CD8-positive, alpha-beta T cell (primary cell): ENCODE measurements at regions of chr12 and their contacts with region 1.

Region 1: DNA sequence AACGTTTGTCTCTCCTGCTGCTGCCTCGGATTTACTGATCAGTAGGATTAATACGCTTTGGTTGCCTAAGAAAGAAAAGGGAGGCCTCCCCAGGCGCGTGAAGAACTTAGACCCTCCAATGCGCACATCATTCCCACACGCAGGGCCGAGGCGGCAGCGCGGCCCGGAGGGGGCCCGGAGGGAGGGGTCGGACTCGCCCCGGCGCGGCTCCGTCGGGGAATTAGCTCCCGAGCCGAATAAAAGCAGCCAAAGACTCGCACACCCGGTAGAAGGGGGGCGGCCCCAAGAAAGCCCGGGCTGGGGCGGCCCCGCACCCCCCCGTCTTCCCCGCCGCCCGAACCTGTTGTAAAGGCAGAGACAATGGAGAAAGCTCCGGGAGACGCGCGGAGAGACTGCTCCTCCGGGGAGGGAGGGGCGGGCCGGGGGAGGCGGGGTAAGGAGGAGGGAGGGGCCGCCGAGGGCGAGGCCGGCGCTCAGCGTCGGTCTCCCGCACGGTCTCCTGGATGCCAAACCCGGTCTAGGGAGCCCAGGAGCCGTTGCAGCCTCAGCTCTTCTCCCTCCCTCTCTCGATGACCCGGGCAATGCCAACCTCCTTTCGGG is at the start of gene NELL2:
- DNase-seq: peak; percentile 46 to 84 (median 74)
- ATAC-seq: peak; percentile 75
- H3K4me3 ChIP-seq: peak within 1 kb of the TSS; percentile 69 to 77
- H3K4me3 Mint-ChIP-seq: peak within 1 kb of the TSS; percentile 98
- H3K27ac ChIP-seq: peak within 1 kb of the TSS; percentile 33 to 59
- H3K27ac Mint-ChIP-seq: peak within 1 kb of the TSS; percentile 92
- H3K4me1 ChIP-seq: peaks cover 14% of the 10 kb centered on the region
- H3K4me1 Mint-ChIP-seq: peaks cover 27% of the 10 kb centered on the region
- H3K27me3 ChIP-seq: peaks cover 0 to 6% of the 10 kb centered on the region in 2 experiments
- H3K27me3 Mint-ChIP-seq: peaks cover 2% of the 10 kb centered on the region
- CTCF ChIP-seq: no peak
- total RNA-seq, gene NELL2: 384 to 390 TPM

Region 2: GRCh38 chr12:44774815-44775411 is 101.1 kb before region 1 on chr12:
- CTCF ChIA-PET with region 1: interaction called, 116 read pairs
- POLR2A ChIA-PET with region 1: interaction called, 6 read pairs
- intact Hi-C with region 1: loop called (anchors 1 kb)
- DNase-seq: peak; percentile 37 to 81 (median 67)
- ATAC-seq: peak; percentile 58
- H3K4me3 ChIP-seq: no peak overlapping the region
- H3K4me3 Mint-ChIP-seq: no peak overlapping the region
- H3K27ac ChIP-seq: no peak overlapping the region
- H3K27ac Mint-ChIP-seq: no peak overlapping the region
- H3K4me1 ChIP-seq: no peaks in the 10 kb centered on the region
- H3K4me1 Mint-ChIP-seq: peaks cover 15% of the 10 kb centered on the region
- H3K27me3 ChIP-seq: no peaks in the 10 kb centered on the region
- H3K27me3 Mint-ChIP-seq: no peaks in the 10 kb centered on the region
- CTCF ChIP-seq: peak; percentile 93

Region 3: DNA sequence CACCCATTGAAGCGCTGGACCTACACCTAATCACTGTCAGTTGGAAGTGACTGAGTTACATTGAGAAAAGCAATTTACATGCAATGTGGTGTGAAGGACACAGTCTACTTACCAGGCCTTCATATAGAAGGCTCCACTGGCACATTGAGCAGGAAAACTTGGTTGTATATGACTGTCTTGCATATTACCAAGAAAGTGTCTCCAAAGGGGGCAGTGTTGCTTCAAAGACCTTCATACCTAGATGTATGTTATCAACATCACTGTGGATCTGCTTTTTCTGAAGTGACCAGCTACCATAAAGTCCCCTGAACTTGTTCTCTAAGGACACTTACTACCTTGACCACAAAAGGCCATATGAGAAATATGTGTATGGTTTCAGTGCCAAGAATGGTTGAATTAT is 64.0 kb before region 1 on chr12:
- CTCF ChIA-PET with region 1: interaction called, 151 read pairs
- POLR2A ChIA-PET with region 1: interaction called, 41 read pairs
- intact Hi-C with region 1: loop called (anchors 1 kb)
- DNase-seq: peak in 6 of 9 experiments; percentile 19 to 86 (median 57)
- ATAC-seq: peak; percentile 83
- H3K4me3 ChIP-seq: no peak overlapping the region
- H3K4me3 Mint-ChIP-seq: no peak overlapping the region
- H3K27ac ChIP-seq: no peak overlapping the region
- H3K27ac Mint-ChIP-seq: peak overlapping the region; percentile 86
- H3K4me1 ChIP-seq: peaks cover 54% of the 10 kb centered on the region
- H3K4me1 Mint-ChIP-seq: peaks cover 64% of the 10 kb centered on the region
- H3K27me3 ChIP-seq: no peaks in the 10 kb centered on the region
- H3K27me3 Mint-ChIP-seq: no peaks in the 10 kb centered on the region
- CTCF ChIP-seq: peak; percentile 55

Region 4: DNA sequence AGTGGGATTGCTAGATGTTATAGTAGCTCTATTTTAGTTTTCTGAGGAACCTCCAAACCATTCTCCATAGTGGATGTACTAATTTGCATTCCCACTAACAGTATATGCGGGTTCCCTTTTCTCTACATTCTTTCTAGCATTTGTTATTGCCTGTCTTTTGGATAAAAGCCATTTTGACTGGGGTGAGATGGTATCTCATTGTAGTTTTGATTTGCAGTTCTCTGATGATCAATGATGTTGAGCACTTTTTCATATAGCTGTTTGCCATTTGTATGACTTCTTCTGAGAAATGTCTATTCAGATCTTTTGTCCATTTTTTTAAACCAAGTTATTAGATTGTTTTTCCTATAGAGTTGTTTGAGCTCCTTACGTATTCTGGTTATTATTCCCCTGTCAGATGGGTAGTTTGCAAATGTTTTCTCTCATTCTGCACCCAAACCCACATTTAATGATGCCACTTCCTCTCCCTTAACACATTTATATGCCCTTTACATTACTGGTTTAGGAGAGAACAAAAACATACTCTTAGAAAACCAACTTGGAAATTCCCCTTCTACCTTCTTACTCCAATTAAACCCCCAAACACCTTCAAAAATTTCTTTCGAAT is 48.1 kb before region 1 on chr12:
- CTCF ChIA-PET with region 1: interaction called, 12 read pairs
- POLR2A ChIA-PET with region 1: interaction called, 9 read pairs
- intact Hi-C with region 1: no loop called
- DNase-seq: peak in 2 of 9 experiments; percentile 77 to 89
- ATAC-seq: peak; percentile 86
- H3K4me3 ChIP-seq: peak overlapping the region in 1 of 2 experiments; percentile 9
- H3K4me3 Mint-ChIP-seq: peak overlapping the region; percentile 65
- H3K27ac ChIP-seq: peak overlapping the region; percentile 63 to 78
- H3K27ac Mint-ChIP-seq: peak overlapping the region; percentile 90
- H3K4me1 ChIP-seq: peaks cover 58% of the 10 kb centered on the region
- H3K4me1 Mint-ChIP-seq: peaks cover 69% of the 10 kb centered on the region
- H3K27me3 ChIP-seq: no peaks in the 10 kb centered on the region
- H3K27me3 Mint-ChIP-seq: no peaks in the 10 kb centered on the region
- CTCF ChIP-seq: no peak

Region 5: DNA sequence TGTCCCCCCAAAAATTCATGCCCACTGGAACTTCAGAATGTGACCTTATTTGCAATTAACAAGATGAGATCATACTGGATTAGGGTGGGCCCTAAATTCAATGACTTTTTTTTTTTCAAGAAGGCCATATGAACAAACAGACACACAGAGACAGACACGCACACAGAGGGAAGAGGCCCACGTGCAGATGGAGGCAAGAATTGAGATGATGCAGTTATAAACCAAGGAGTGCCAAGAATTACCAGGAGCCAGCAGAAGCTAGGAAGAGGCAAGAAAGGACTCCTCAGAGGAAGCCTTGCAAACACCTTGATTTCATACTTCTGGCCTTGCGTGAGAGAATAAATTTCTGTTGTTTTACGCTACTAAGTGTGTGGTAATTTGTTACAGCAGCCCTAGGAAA is 33.4 kb before region 1 on chr12:
- CTCF ChIA-PET with region 1: interaction called, 29 read pairs
- POLR2A ChIA-PET with region 1: interaction called, 28 read pairs
- intact Hi-C with region 1: loop called in 1 of 2 experiments (anchors 5 kb)
- DNase-seq: peak in 4 of 9 experiments; percentile 30 to 67 (median 38)
- ATAC-seq: peak; percentile 65
- H3K4me3 ChIP-seq: peak overlapping the region; percentile 23 to 43
- H3K4me3 Mint-ChIP-seq: peak overlapping the region; percentile 73
- H3K27ac ChIP-seq: peak overlapping the region; percentile 62 to 66
- H3K27ac Mint-ChIP-seq: peak overlapping the region; percentile 95
- H3K4me1 ChIP-seq: peaks cover 95% of the 10 kb centered on the region
- H3K4me1 Mint-ChIP-seq: peaks cover 87% of the 10 kb centered on the region
- H3K27me3 ChIP-seq: no peaks in the 10 kb centered on the region
- H3K27me3 Mint-ChIP-seq: no peaks in the 10 kb centered on the region
- CTCF ChIP-seq: no peak

Region 6: DNA sequence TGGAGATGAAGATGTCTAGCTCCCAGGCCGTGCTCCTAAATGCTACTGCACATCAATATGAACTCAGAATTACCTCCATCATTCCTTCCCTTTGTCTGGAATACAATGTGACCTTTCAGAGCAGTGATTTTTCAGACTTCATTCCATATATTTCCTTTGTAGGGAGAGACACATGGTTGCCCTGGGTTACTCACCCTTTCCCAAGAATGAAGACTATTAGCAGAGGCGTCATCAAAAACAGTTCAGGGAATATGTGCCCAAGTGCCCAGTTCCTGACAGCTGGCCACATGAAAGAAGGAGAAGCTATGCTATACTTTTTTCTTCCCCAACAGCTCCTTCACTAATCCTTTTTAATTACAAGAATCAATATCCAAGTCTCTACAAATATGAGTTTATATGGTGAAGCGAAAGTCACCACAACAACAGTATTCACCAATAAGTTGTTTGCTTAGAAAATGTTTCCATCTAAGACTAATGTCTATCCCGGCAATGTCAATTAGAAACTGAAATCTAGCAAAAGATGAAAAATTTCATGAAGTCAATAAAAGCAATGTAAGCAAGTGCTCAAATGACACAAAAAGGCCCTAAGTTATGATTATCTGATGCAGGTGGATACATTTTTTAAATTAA is 17.7 kb before region 1 on chr12:
- CTCF ChIA-PET with region 1: interaction called, 14 read pairs
- POLR2A ChIA-PET with region 1: interaction called, 7 read pairs
- intact Hi-C with region 1: no loop called
- DNase-seq: no peak
- ATAC-seq: no peak
- H3K4me3 ChIP-seq: no peak overlapping the region
- H3K4me3 Mint-ChIP-seq: peak overlapping the region; percentile 44
- H3K27ac ChIP-seq: no peak overlapping the region
- H3K27ac Mint-ChIP-seq: peak overlapping the region; percentile 60
- H3K4me1 ChIP-seq: peaks cover 97% of the 10 kb centered on the region
- H3K4me1 Mint-ChIP-seq: peaks cover 85% of the 10 kb centered on the region
- H3K27me3 ChIP-seq: peaks cover 0 to 2% of the 10 kb centered on the region in 2 experiments
- H3K27me3 Mint-ChIP-seq: no peaks in the 10 kb centered on the region
- CTCF ChIP-seq: no peak